ENCODE measurements at regions of chr9 and their contacts with region 1.

Region 1: GRCh38 chr9:121545875-121546423 is 46.3 kb upstream of the GGTA1 start:
- DNase-seq: peak; percentile 93 to 96 (median 95)
- H3K4me3 ChIP-seq: no peak overlapping the region
- H3K27ac ChIP-seq: no peak overlapping the region
- H3K4me1 ChIP-seq: no peaks in the 10 kb centered on the region
- H3K27me3 ChIP-seq: no peaks in the 10 kb centered on the region
- CTCF ChIP-seq: peak; percentile 93 to 97 (median 95)
- EP300 ChIP-seq: no peak
- POLR2A ChIP-seq: no peak

Region 2: DNA sequence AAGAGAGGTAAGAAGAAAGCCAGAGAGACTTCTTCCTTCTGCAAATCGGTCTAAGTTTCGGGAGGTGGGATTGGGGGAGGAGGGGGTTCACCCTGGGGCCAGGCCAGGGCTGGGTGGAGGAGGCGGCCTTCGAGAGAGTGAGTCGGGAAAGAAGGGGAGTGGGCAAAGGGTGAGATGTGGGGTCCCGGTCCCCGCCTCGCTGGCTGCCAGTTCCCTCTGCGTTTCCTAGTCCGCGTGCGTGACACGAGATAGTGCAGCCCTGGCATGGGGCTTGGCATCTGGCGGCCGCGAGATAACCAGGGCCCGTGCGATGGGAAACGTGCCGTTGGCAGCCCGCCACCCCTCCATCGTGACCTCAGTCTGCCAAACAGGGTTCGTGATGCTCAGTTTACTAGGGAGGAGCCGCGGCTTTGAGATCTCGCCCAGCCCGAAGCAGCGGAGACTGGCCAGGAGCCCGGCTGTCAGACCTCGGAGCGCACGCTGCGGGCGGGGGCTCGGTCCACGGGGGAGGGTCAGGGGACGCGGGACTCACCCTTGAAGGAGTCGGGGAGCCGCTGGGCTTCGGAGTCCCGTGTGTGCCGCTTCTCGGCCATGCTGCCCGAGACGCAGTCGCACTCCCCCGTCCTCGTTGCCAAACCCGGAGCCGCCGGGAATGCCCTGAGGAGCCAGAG is 176.2 kb before region 1 on chr9 and contains the start of gene STOM:
- intact Hi-C with region 1: no loop called
- DNase-seq: peak; percentile 85 to 95 (median 91)
- H3K4me3 ChIP-seq: peak within 1 kb of the TSS; percentile 54
- H3K27ac ChIP-seq: peak within 1 kb of the TSS; percentile 91 to 94
- H3K4me1 ChIP-seq: peaks cover 18% of the 10 kb centered on the region
- H3K27me3 ChIP-seq: no peaks in the 10 kb centered on the region
- CTCF ChIP-seq: no peak
- EP300 ChIP-seq: no peak
- POLR2A ChIP-seq: peak; percentile 99
- total RNA-seq, gene STOM: 73.1 to 205 (median 164) TPM

Region 3: DNA sequence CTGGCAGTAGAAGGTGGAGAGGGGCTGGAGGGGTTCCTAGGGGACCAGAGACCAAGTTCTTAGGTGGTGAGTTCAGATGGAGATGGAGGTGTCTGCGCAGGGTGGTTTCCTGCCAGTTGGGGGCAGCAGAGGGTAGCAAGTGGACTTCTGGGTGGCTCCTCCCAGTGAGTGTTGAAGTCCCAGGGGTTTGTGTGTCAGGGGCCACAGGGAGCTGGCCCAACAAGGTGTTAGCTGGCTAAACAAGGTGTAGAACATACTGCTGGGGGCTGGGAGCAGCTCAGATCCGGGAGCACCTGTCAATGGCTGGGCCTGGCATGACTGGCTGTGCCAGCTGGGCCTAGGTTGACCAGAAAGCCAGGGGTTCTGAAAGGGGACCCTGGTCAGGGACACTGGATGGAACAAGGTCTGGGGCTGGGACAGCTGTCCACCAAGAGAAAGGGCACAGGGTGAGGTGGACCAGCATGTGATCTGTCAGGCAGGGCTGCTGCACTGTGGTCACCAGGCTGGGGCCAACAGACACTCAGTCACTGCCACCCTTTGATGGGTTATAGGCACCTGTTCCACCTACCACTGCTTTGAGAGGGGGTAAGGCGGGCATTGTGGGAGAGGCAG is 141.1 kb after region 1 on chr9:
- intact Hi-C with region 1: loop called (anchors 2 to 10 kb)
- DNase-seq: peak; percentile 74 to 88 (median 87)
- H3K4me3 ChIP-seq: no peak overlapping the region
- H3K27ac ChIP-seq: peak overlapping the region in 1 of 2 donors; percentile 11
- H3K4me1 ChIP-seq: peaks cover 9% of the 10 kb centered on the region
- H3K27me3 ChIP-seq: no peaks in the 10 kb centered on the region
- CTCF ChIP-seq: peak; percentile 84 to 90 (median 89)
- EP300 ChIP-seq: no peak
- POLR2A ChIP-seq: no peak

Region 4: GRCh38 chr9:121895818-121896544 is 350.0 kb after region 1 on chr9:
- intact Hi-C with region 1: loop called in 1 of 4 experiments (anchors 10 kb)
- DNase-seq: peak; percentile 76 to 80 (median 78)
- H3K4me3 ChIP-seq: no peak overlapping the region
- H3K27ac ChIP-seq: peak overlapping the region in 1 of 2 donors; percentile 56
- H3K4me1 ChIP-seq: peaks cover 3% of the 10 kb centered on the region
- H3K27me3 ChIP-seq: no peaks in the 10 kb centered on the region
- CTCF ChIP-seq: peak in 1 of 3 donors; percentile 16
- EP300 ChIP-seq: no peak
- POLR2A ChIP-seq: no peak

Region 5: GRCh38 chr9:122005597-122005996 is 459.6 kb after region 1 on chr9:
- intact Hi-C with region 1: loop called in 1 of 4 experiments (anchors 5 kb)
- DNase-seq: no peak
- H3K4me3 ChIP-seq: no peak overlapping the region
- H3K27ac ChIP-seq: no peak overlapping the region
- H3K4me1 ChIP-seq: peaks cover 8% of the 10 kb centered on the region
- H3K27me3 ChIP-seq: no peaks in the 10 kb centered on the region
- CTCF ChIP-seq: no peak
- EP300 ChIP-seq: no peak
- POLR2A ChIP-seq: no peak

Region 6: DNA sequence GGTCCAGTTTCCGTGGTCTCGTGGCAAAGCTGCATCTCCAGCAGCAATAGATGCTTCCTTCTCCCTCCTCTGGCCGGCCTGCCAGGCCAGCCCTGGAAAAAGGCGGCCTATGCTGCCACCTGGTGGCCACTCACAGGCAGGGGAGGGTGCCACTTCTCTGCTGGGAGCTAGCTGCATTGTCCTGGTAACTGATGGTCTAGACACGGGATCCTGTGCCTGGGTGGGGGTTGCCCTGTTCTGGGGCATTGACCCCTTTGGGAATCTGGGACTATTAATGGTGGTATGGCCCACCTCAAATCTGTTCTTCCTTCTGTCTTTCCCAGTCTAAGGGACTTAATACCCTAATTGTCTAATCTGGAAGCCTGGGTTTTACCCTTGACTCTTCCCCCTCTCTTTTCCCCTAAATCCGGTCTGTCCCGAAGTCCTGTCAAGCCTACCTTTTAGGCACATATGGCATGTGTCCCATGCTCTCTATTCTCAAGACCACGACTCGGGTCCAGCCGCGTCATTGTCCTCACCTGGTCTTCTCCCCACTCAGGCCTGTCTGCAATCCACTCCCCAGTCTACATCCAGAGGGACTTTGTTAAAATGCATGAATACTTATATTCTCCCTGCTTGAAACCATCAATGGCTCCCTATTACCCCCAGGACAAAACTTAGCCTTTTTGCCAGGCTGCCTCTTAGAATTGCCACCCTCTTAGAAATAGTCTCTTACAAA is 804.8 kb after region 1 on chr9:
- intact Hi-C with region 1: loop called in 1 of 4 experiments (anchors 1 kb)
- DNase-seq: peak; percentile 69 to 87 (median 82)
- H3K4me3 ChIP-seq: no peak overlapping the region
- H3K27ac ChIP-seq: no peak overlapping the region
- H3K4me1 ChIP-seq: peaks cover 2% of the 10 kb centered on the region
- H3K27me3 ChIP-seq: no peaks in the 10 kb centered on the region
- CTCF ChIP-seq: peak; percentile 67 to 90 (median 84)
- EP300 ChIP-seq: no peak
- POLR2A ChIP-seq: no peak